ENCODE measurements at regions of chr9 and their contacts with region 1.

Region 1: GRCh38 chr9:76704593-76705204 is 59.5 kb upstream of the PCA3 start:
- DNase-seq: peak; percentile 80
- H3K4me3 ChIP-seq: no peak overlapping the region
- H3K27ac ChIP-seq: no peak overlapping the region
- H3K4me1 ChIP-seq: no peaks in the 10 kb centered on the region
- H3K27me3 ChIP-seq: peaks cover 58% of the 10 kb centered on the region
- CTCF ChIP-seq: peak; percentile 63

Region 2: DNA sequence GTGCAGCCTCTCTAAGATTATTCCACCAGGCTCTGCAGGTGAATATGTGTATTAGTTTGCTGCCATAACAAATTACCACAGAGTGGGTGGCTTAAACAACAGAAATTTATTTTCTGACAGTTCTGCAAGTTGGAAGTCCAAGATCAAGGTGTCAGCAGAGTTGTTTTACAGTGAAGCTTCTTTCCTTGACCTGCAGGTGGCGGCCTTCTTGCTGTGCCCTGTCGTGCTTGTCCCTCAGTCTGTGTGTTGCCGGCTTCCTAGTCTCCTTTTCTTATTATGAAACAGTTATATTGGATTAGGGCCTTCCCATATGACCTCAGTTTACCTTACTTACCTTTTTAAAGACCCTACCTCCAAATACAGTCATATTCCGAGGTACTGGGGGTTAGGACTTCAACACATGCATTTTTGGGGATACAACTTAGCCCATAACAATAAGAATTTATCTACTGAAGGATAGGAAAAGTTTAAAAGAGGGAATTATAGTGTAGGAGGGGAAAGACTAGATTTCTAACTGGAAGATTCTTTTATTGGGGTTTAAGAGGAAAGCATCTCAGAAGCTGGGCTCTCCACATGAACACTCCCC is 1519.0 kb before region 1 on chr9:
- CTCF ChIA-PET with region 1: no interaction called
- POLR2A ChIA-PET with region 1: no interaction called
- intact Hi-C with region 1: loop called (anchors 5 kb)
- DNase-seq: peak; percentile 58
- H3K4me3 ChIP-seq: no peak overlapping the region
- H3K27ac ChIP-seq: no peak overlapping the region
- H3K4me1 ChIP-seq: no peaks in the 10 kb centered on the region
- H3K27me3 ChIP-seq: no peaks in the 10 kb centered on the region
- CTCF ChIP-seq: peak; percentile 77

Region 3: DNA sequence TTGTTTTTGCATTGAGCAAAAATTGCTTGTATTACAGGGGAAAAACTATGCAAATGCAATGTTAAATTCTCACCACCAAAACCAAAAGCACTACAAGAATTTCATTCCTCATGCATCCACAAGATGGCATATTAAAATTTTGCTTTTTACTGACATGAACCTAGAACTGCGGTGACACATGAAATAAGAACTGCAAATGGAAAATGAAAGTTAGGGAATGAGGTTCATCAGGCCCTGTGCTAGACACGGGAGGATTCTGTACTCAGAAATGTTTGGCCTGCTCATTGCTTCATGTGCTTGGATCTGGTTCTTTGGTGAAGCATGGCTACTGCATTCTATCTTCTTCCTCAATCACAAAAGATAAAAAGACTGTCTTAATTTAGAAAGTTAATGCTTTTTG is 301.3 kb before region 1 on chr9:
- CTCF ChIA-PET with region 1: no interaction called
- POLR2A ChIA-PET with region 1: no interaction called
- intact Hi-C with region 1: loop called (anchors 2 kb)
- DNase-seq: peak; percentile 70
- H3K4me3 ChIP-seq: peak overlapping the region; percentile 3
- H3K27ac ChIP-seq: no peak overlapping the region
- H3K4me1 ChIP-seq: no peaks in the 10 kb centered on the region
- H3K27me3 ChIP-seq: no peaks in the 10 kb centered on the region
- CTCF ChIP-seq: peak; percentile 57

Region 4: GRCh38 chr9:76451234-76451633 is 253.5 kb before region 1 on chr9:
- CTCF ChIA-PET with region 1: interaction called, 3 read pairs
- POLR2A ChIA-PET with region 1: no interaction called
- intact Hi-C with region 1: loop called (anchors 1 kb)
- DNase-seq: no peak
- H3K4me3 ChIP-seq: no peak overlapping the region
- H3K27ac ChIP-seq: no peak overlapping the region
- H3K4me1 ChIP-seq: no peaks in the 10 kb centered on the region
- H3K27me3 ChIP-seq: no peaks in the 10 kb centered on the region
- CTCF ChIP-seq: no peak

Region 5: DNA sequence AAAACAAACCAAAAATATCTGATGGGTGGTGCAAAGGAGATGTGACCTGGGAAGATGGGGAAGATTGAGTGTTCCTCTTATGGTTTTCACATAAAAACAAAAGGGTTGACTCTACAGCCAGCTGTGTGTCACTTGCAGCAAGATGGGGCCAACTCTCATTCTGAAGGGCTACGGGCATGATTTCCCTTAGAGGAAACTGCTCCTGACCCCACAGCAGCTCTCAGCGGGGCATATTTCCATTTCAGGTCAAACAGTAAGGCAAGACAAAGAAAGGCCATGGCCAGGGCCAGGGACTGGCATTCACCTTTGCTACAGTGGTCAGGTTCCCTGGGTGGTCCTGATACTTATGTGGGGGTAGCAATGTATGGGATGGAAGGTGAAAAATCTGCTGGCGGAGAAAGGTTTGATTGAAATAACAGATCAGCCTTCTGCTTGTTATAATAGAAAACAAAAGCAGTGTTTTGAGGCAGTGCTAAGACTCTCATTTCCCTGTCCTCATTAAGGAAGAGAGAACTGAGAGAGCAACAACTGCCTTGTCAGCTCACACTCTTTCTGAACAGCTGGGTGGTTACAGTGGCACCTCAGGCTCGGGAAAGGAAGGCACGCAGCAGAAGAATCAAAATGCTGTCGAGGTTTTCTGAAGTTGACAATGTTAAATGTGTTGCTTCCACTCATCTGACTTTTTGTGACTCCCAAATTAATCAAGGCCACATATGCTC is 61.1 kb before region 1 on chr9:
- CTCF ChIA-PET with region 1: no interaction called
- POLR2A ChIA-PET with region 1: no interaction called
- intact Hi-C with region 1: loop called (anchors 10 kb)
- DNase-seq: no peak
- H3K4me3 ChIP-seq: no peak overlapping the region
- H3K27ac ChIP-seq: no peak overlapping the region
- H3K4me1 ChIP-seq: no peaks in the 10 kb centered on the region
- H3K27me3 ChIP-seq: peaks cover 23% of the 10 kb centered on the region
- CTCF ChIP-seq: no peak

Region 6: DNA sequence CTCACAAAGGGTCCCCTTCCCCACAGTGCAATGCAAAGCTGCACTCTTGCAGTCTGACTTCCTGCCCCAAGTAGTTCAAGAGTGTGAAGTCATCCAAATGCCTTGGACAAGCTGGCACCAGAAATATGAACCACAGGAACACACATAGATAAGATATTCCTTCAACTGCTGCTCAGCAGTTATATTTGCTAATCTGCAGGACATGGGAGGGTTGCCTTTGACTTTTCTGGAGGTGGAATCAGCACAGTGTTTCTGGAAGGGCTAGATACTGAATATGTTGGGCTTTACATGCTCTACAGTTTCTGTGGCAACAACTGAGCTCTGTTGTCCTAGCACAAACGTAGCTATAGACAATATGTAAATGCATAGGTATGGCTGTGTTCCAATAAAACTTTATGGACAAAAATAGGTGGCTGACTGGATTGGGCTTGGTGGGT is 37.2 kb before region 1 on chr9:
- CTCF ChIA-PET with region 1: no interaction called
- POLR2A ChIA-PET with region 1: no interaction called
- intact Hi-C with region 1: loop called (anchors 5 kb)
- DNase-seq: no peak
- H3K4me3 ChIP-seq: no peak overlapping the region
- H3K27ac ChIP-seq: no peak overlapping the region
- H3K4me1 ChIP-seq: peaks cover 6% of the 10 kb centered on the region
- H3K27me3 ChIP-seq: peaks cover 4% of the 10 kb centered on the region
- CTCF ChIP-seq: no peak